GM23248 (cell line): ENCODE measurements at regions of chr3 and their contacts with region 1.

Region 1: GRCh38 chr3:131026321-131027178 is at the starts of genes ASTE1 and NEK11:
- DNase-seq: peak; percentile 97
- H3K4me3 ChIP-seq: peak within 1 kb of the TSS; percentile 80
- H3K27ac ChIP-seq: peak within 1 kb of the TSS; percentile 79
- H3K4me1 ChIP-seq: peaks cover 18% of the 10 kb centered on the region
- H3K27me3 ChIP-seq: no peaks in the 10 kb centered on the region
- total RNA-seq, gene ASTE1: 4.8 and 5.8 TPM in 2 replicates
- total RNA-seq, gene NEK11: 15.9 and 18.5 TPM in 2 replicates

Region 2: DNA sequence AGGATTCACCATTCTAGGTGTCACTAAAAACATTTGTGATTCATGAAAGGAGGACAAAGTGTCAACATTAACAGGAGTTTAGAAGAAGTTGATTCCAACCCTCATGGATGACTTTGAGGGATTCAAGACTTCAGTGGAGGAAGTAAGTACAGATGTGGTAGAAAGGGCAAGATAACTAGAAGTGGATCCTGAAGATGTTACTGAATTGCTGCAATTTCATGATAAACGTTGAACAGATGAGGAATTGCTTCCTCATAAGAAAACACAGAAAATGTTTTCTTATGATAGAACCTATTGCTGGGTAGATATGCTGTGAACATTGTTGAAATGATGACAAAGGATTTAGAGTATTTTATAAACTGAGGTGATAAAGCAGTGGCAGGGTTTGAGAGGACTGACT is 156.1 kb before region 1 on chr3:
- in situ Hi-C with region 1: no loop called
- DNase-seq: no peak
- H3K4me3 ChIP-seq: no peak overlapping the region
- H3K27ac ChIP-seq: no peak overlapping the region
- H3K4me1 ChIP-seq: no peaks in the 10 kb centered on the region
- H3K27me3 ChIP-seq: no peaks in the 10 kb centered on the region; the same call in 1 of the 2 replicates

Region 3: DNA sequence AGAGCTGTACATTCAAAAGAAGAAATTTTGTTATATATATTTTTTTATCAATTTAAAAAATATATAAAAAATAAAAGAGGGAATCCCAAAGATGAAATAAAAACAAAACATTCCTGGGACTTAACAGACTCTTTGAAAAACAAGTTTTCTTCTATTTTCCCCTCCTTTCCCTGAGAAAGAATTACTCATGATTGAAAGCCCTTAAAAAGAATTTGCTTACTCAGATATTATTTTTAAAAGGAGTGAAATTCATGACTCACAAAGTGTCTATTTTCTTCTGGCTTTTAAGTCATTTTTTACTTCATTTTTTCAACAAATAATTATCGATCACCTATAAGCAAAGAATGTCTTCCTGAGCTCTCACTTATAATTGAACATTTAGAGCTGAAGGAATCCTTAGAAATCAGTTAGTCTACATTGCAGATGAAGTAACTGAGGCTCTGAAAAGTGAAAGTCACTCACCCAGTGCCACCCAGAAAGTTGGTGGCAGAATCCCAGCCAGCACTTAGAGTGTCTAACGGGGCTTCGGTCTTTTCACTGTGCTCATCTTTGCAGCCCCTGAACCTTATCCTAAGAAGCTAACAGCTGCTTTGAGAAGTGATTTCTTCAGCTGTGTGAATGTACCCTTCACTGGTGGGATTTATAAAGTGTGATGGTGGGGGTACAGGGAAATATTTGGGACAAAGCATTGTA is 312.5 kb after region 1 on chr3:
- in situ Hi-C with region 1: no loop called
- DNase-seq: peak; percentile 49
- H3K4me3 ChIP-seq: peak overlapping the region; percentile 29; the same call in 1 of the 2 replicates
- H3K27ac ChIP-seq: no peak overlapping the region
- H3K4me1 ChIP-seq: peaks cover 15% of the 10 kb centered on the region
- H3K27me3 ChIP-seq: no peaks in the 10 kb centered on the region

Region 4: DNA sequence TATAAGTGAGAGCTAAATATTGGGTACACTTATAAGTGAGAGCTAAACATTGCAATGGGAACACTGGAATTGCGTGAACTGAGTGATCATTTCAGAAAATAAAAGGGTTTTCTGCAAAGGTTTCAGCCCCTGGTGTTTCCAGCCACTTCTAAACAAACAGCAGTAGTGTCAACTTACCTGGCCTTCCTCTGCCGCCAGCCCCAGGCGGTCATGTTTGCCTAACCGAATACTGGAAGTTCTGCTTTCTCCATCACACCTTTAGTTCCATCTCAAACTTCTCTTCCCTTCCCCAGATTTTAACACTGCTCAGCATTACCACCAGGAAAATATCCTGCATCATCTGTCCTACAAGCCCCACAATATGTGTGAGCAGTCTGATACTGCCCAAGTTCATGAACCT is 417.6 kb after region 1 on chr3:
- in situ Hi-C with region 1: no loop called
- DNase-seq: no peak
- H3K4me3 ChIP-seq: no peak overlapping the region
- H3K27ac ChIP-seq: no peak overlapping the region
- H3K4me1 ChIP-seq: no peaks in the 10 kb centered on the region
- H3K27me3 ChIP-seq: no peaks in the 10 kb centered on the region

Region 5: GRCh38 chr3:131494706-131495105 is 468.2 kb after region 1 on chr3:
- in situ Hi-C with region 1: loop called (anchors 25 kb)
- DNase-seq: no peak
- H3K4me3 ChIP-seq: no peak overlapping the region
- H3K27ac ChIP-seq: no peak overlapping the region
- H3K4me1 ChIP-seq: no peaks in the 10 kb centered on the region
- H3K27me3 ChIP-seq: no peaks in the 10 kb centered on the region

Region 6: GRCh38 chr3:132006605-132007204 is 980.2 kb after region 1 on chr3:
- in situ Hi-C with region 1: loop called (anchors 25 kb)
- DNase-seq: peak; percentile 71
- H3K4me3 ChIP-seq: no peak overlapping the region
- H3K27ac ChIP-seq: no peak overlapping the region
- H3K4me1 ChIP-seq: 0 out of 2 replicates have a peak, but pooled peaks cover 8% of the 10 kb centered on the region
- H3K27me3 ChIP-seq: no peaks in the 10 kb centered on the region; the same call in 1 of the 2 replicates